Activated CD4-positive, alpha-beta T cell treated with anti-CD3 and anti-CD28 coated beads for 36 hours (primary cell): ENCODE measurements at regions of chr1 and their contacts with region 1.

Region 1: GRCh38 chr1:200488375-200489165 is 78.7 kb upstream of the ZNF281 start:
- DNase-seq: peak; percentile 59
- ATAC-seq: peak; percentile 77
- H3K4me3 Mint-ChIP-seq: no peak overlapping the region
- H3K27ac Mint-ChIP-seq: no peak overlapping the region
- H3K4me1 Mint-ChIP-seq: peaks cover 8% of the 10 kb centered on the region
- H3K27me3 Mint-ChIP-seq: peaks cover 13% of the 10 kb centered on the region

Region 2: GRCh38 chr1:200139661-200140250 is 348.8 kb before region 1 on chr1:
- CTCF ChIA-PET with region 1: interaction called, 5 read pairs
- POLR2A ChIA-PET with region 1: no interaction called
- intact Hi-C with region 1: loop called (anchors 1 kb)
- DNase-seq: peak; percentile 39
- ATAC-seq: peak; percentile 88
- H3K4me3 Mint-ChIP-seq: no peak overlapping the region
- H3K27ac Mint-ChIP-seq: no peak overlapping the region
- H3K4me1 Mint-ChIP-seq: no peaks in the 10 kb centered on the region
- H3K27me3 Mint-ChIP-seq: no peaks in the 10 kb centered on the region

Region 3: GRCh38 chr1:200279810-200280411 is 208.7 kb before region 1 on chr1:
- CTCF ChIA-PET with region 1: interaction called, 9 read pairs
- POLR2A ChIA-PET with region 1: interaction called, 4 read pairs
- intact Hi-C with region 1: loop called (anchors 1 kb)
- DNase-seq: peak; percentile 51
- ATAC-seq: no peak
- H3K4me3 Mint-ChIP-seq: no peak overlapping the region
- H3K27ac Mint-ChIP-seq: no peak overlapping the region
- H3K4me1 Mint-ChIP-seq: no peaks in the 10 kb centered on the region
- H3K27me3 Mint-ChIP-seq: no peaks in the 10 kb centered on the region

Region 4: DNA sequence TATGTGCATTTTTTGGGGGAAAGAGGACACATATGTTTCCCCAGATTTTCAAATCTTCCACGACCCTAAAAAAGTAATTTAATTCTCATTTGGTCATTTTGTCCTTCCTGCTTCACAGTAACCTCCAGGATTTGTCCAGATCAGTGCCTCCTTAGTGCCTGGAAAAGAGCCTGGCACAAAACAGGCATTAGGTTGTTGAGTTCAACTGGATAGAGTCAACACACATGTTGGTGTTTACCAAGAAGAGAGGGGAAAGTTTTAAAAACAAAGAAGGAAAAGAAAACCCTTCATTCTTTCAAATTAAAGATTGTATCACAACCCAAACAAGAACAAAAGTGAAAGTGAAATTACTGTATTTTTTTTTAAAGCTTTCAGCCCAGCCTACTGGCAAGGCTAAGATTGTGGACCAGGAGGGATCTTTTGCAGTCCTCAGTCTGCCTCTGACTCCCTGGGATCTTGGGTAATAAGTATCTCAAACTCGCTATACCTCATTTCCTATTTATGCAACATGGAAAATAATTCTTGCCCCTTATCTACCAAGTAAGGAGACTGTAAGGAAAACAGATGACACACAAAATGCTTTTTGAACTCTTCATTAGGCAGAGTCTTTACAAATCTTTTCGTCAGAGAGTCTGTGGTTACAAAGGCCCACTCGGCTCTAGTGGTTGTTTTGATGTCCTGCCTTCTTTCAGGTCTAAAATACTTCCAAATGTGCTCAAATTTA is 136.6 kb before region 1 on chr1:
- CTCF ChIA-PET with region 1: interaction called, 4 read pairs
- POLR2A ChIA-PET with region 1: no interaction called
- intact Hi-C with region 1: loop called (anchors 2 to 5 kb)
- DNase-seq: peak; percentile 23
- ATAC-seq: peak; percentile 68
- H3K4me3 Mint-ChIP-seq: peak overlapping the region; percentile 30
- H3K27ac Mint-ChIP-seq: peak overlapping the region; percentile 82
- H3K4me1 Mint-ChIP-seq: peaks cover 35% of the 10 kb centered on the region
- H3K27me3 Mint-ChIP-seq: no peaks in the 10 kb centered on the region

Region 5: GRCh38 chr1:200448034-200448762 is 40.4 kb before region 1 on chr1:
- CTCF ChIA-PET with region 1: interaction called, 3 read pairs
- POLR2A ChIA-PET with region 1: no interaction called
- intact Hi-C with region 1: loop called (anchors 1 kb)
- DNase-seq: peak; percentile 15
- ATAC-seq: peak; percentile 75
- H3K4me3 Mint-ChIP-seq: no peak overlapping the region
- H3K27ac Mint-ChIP-seq: peak overlapping the region; percentile 92
- H3K4me1 Mint-ChIP-seq: peaks cover 44% of the 10 kb centered on the region
- H3K27me3 Mint-ChIP-seq: peaks cover 7% of the 10 kb centered on the region